Activated CD4-positive, alpha-beta T cell treated with anti-CD3 and anti-CD28 coated beads, Interleukin-2, amount 10 ng/mL, durations not matched to agents 7 days and 5 days (primary cell): ENCODE measurements at regions of chr11 and their contacts with region 1.

Region 1: DNA sequence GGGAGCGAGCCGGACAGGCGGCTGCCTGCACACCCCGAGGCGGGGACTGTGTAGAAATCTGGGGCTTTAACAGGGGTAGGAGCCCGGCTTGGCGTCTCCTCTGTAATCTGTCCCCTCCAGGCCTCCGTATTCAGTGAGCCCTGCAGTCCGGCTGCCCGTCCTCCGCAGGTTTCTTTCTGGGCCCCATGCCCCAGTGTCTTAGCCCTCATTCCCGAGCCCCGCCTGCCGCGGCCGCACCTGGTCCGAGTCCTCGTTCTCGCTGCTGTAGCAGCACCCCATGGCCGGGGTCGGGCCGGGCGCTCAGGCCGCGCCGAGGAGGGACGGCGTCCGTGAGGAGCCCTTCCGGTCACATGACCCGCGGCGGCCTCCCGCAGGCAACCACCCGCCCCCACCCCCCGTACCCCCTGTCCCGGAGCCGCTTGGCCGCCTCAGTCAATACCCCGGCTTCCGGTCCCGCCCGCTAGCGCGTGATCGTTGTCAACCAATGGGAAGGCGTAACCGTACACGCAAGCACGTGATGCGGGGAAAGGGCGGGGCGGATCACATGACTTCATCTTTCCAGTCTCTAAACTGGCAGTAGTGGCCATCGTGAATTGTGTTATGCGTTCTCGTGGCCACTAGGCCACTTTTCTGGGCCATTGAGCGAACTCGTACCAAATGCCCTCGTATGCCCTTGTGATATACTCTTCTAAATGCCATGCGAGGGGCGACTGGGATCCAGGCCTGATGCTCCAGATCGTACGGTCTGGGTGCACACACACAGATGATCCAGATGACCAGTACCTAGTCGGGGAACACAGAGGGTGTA is at the start of gene LAMTOR1:
- DNase-seq: peak; percentile 99
- H3K4me3 Mint-ChIP-seq: peak within 1 kb of the TSS; percentile 86
- H3K27ac Mint-ChIP-seq: peak within 1 kb of the TSS; percentile 90
- H3K4me1 Mint-ChIP-seq: peaks cover 40% of the 10 kb centered on the region
- H3K27me3 Mint-ChIP-seq: no peaks in the 10 kb centered on the region
- total RNA-seq, gene LAMTOR1: 68.1 to 70.4 TPM

Region 2: GRCh38 chr11:71928737-71929452 is 174.3 kb before region 1 on chr11 and contains the start of gene RNF121:
- CTCF ChIA-PET with region 1: no interaction called
- POLR2A ChIA-PET with region 1: no interaction called
- DNase-seq: peak; percentile 99
- H3K4me3 Mint-ChIP-seq: peak within 1 kb of the TSS; percentile 97
- H3K27ac Mint-ChIP-seq: peak within 1 kb of the TSS; percentile 99
- H3K4me1 Mint-ChIP-seq: peaks cover 48% of the 10 kb centered on the region
- H3K27me3 Mint-ChIP-seq: no peaks in the 10 kb centered on the region
- total RNA-seq, gene RNF121: 23.8 to 26.4 TPM

Region 3: DNA sequence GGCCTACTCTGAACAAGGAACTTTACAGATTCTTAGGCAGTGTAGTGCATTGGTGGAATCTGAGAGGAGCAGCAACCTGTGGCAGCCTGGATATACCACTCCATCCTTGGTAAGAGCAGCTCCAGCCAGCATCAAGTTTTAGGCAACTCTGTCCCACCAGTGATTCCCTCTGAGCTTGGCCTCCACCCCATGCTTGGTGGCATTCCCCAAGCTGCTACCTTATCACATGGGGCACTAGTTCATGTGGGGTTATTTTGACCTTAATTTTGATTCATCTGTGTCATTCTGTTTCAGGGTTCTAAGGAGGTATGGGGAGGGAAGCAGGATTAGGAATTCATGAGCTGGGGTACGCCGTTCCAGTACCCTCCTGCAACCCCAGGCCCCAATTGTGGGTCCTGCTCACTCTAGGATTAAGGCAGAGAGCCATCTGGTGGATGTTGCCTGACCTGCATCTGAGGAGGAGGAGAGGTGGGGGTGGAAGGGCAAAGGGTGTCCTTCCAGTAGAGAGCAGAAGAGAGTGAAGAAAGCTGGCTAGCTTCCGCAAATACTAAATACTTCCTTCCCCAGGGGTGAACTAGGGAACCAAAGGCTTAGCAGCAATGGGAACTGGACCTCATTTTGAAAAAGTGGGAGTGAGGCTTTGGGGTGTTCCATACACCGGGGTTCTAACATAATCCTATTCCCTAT is 12.0 kb before region 1 on chr11:
- CTCF ChIA-PET with region 1: interaction called, 31 read pairs
- POLR2A ChIA-PET with region 1: no interaction called
- DNase-seq: peak; percentile 76
- H3K4me3 Mint-ChIP-seq: no peak overlapping the region
- H3K27ac Mint-ChIP-seq: no peak overlapping the region
- H3K4me1 Mint-ChIP-seq: peaks cover 16% of the 10 kb centered on the region
- H3K27me3 Mint-ChIP-seq: no peaks in the 10 kb centered on the region

Region 4: DNA sequence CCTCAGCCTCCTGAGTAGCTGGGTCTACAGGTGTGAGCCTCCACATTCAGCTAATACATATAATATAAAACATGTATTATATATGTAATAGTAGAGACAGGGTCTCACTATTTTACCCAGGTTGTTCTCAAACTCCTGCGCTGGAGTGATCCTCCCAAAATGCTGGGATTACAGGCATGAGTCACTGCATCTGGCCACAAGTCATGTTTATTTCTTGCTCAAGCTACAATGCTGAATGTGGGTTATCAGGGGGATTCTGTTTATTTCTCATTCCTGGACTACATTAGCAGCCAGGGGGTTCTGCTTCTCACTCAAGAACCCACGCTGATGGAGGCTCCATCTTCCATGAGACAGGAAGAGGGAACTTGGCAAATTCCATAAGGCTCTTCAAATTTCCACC is 57.2 kb after region 1 on chr11:
- CTCF ChIA-PET with region 1: no interaction called
- POLR2A ChIA-PET with region 1: no interaction called
- DNase-seq: no peak
- H3K4me3 Mint-ChIP-seq: no peak overlapping the region
- H3K27ac Mint-ChIP-seq: no peak overlapping the region
- H3K4me1 Mint-ChIP-seq: no peaks in the 10 kb centered on the region
- H3K27me3 Mint-ChIP-seq: peaks cover 27% of the 10 kb centered on the region